ENCODE measurements at regions of chr14 and their contacts with region 1.

Region 1: GRCh38 chr14:72023722-72024407 is 91.6 kb downstream of the RGS6 start:
- DNase-seq: peak; percentile 40 to 51 (median 42)
- ATAC-seq: peak; percentile 62
- H3K4me3 ChIP-seq: no peak overlapping the region
- H3K27ac ChIP-seq: no peak overlapping the region
- H3K4me1 ChIP-seq: no peaks in the 10 kb centered on the region
- H3K27me3 ChIP-seq: no peaks in the 10 kb centered on the region
- CTCF ChIP-seq: peak; percentile 26 to 64 (median 55)
- POLR2A ChIP-seq: no peak

Region 2: GRCh38 chr14:71908116-71908515 is 115.7 kb before region 1 on chr14:
- intact Hi-C with region 1: no loop called
- DNase-seq: no peak
- ATAC-seq: no peak
- H3K4me3 ChIP-seq: no peak overlapping the region
- H3K27ac ChIP-seq: no peak overlapping the region
- H3K4me1 ChIP-seq: no peaks in the 10 kb centered on the region
- H3K27me3 ChIP-seq: peaks cover 0 to 3% of the 10 kb centered on the region in 2 donors
- CTCF ChIP-seq: no peak
- POLR2A ChIP-seq: no peak

Region 3: DNA sequence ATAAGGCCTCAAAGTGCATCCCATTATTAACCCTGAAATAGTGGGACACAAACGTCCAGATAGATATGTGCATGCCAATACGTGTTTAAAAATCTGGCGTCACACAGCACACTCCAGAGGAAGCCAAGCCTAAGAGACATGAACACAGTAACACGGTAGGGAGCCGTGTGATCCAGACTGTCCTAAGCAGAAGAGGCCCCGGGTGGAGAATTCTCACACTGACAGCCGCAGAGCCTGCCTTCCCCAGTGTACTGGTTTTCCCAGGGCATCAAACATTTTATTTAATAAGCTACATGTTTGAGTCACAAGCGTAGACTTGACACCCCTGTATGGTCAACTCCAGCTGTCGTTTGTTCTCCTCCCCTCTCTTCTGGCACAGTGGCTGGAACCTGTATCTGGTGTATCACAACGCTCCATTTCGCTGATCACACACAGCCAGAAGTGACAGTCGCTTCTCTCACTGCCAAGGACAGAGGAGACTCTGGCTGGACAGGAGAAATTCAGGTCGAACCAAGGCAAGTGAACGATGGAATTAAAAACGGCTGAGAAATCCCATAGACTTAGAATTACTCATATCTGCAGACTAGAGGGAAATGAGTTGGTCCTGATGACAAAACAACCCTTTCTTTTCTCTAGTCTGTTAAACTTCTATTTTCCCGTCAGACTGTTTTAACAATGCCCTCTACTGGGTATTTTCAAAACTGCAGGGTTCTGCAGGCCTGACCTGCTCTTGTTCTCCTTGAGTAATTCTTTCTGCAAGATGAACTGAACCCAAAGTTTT is 268.2 kb after region 1 on chr14:
- intact Hi-C with region 1: loop called (anchors 5 kb)
- DNase-seq: peak; percentile 19 to 25 (median 23)
- ATAC-seq: peak; percentile 53
- H3K4me3 ChIP-seq: no peak overlapping the region
- H3K27ac ChIP-seq: no peak overlapping the region
- H3K4me1 ChIP-seq: no peaks in the 10 kb centered on the region
- H3K27me3 ChIP-seq: no peaks in the 10 kb centered on the region
- CTCF ChIP-seq: peak; percentile 41 to 72 (median 63)
- POLR2A ChIP-seq: no peak